HEK293 (cell line): ENCODE measurements at regions of chr3 and their contacts with region 1.

Region 1: DNA sequence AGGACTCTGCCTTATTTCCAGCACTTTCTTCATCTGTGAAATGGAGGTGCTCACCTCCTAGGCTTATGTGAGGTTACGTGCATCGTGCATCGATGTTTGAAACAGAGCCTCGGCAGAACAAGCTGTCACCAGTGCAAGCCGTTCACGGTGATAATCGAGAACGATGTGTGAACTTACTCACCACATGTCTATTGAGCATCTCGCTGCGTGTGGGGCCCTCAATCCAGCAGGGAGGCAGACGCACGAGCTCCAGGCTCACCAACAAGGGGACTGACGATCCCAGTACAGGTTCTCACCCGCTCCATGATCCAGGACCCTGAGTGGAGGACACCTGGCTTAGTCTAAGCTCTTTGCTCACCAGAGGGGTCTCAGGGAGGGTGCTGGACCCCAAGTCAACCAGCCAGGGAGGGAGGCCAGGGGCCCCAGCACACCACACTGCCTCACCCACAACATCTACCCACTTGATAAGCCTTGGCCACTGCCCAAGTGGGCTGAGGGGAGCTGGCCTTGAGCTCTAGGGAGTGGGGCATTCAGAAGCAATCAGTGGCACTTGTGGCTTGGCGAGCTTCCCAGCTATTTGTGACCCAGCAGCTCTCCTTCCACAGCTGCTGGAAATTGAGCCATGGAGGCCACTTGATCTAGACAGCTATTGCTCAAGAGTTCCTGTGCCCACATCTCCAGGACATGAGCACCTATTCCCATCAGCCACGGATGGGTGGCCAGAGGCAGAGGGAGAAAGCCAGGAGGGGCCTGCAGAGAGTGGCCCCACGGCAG is 34.4 kb upstream of the SLC6A1 start:
- H3K4me3 ChIP-seq: no peak overlapping the region
- H3K27ac ChIP-seq: no peak overlapping the region
- H3K4me1 ChIP-seq: peaks cover 2% of the 10 kb centered on the region; the same call in 1 of the 2 replicates
- CTCF ChIP-seq: no peak

Region 2: DNA sequence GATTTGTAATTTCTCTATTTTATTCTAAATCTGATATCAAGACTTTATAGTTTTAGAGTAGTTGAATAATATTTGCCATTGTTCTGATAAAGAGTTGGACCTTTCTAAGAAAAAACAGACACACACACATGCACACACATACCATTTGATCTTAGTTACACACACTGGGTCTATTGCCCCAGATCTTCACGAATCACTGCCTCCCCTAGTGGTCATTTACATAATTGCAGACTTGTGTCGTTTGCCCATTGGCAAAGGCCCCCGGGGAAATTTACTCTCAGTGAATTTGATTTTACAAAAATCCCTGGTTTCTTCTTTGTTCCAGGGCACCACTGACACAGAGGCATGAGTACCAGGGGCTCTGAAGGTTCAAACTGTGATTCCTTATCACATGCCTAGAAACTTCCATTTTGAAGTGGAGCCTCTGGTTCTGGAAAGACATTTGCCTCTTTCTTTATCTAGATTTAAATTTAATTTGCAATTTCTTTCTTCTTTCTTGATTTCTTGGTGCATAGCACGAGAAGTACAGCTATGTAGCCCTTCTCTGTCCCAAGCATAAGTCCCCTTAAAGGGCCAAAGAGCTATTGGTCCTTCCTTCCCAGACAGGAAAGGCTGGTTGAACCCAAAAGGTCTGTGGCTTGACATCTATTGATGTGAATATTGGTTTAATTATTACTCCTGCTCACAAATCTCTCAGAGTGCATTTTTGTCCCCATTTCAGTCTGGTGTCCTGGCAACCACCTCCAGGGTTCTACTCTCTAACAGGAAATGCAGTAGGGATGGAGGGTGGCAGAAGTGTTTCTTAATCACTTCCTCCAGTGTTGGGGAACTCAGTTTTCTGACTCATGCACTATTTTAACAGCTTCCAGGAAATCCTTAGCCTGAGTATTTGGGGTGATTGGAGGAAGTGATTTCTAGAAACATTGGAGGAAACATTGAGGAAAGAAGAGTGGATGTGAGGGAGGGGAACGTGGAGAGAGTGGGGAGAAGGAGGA is 174.5 kb before region 1 on chr3:
- CTCF ChIA-PET with region 1: no interaction called
- POLR2A ChIA-PET with region 1: no interaction called
- H3K4me3 ChIP-seq: no peak overlapping the region
- H3K27ac ChIP-seq: no peak overlapping the region
- H3K4me1 ChIP-seq: no peaks in the 10 kb centered on the region
- CTCF ChIP-seq: no peak

Region 3: DNA sequence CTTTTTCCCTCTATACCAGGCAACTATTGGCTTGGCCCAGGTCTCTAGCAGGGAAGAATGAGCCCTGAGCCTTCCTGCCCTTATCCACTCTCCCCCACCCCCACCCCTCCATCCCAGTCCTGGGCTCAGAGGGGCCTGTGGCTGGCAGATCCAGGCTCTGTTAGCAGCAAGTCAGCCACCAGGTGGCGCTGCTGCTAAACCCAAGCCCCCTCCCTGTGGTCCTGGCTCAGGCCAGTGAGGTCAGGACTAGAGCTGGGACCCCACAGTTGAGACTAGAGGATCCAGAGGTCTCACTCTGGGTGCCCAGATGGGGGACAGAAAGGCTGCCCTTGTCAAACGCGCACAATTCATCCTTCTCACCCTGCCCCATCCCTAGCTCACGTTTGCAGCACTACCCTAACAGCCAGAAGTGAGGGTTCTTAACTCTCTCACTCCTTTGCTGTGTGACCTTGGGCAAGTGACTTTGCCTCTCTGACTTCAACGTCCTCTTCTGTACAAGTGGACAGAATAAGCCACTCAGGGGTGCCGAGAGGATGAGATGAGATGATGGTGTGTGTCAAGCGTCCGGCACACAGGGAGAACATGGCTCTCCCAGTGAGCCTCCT is 12.4 kb before region 1 on chr3:
- CTCF ChIA-PET with region 1: interaction called, 12 read pairs
- POLR2A ChIA-PET with region 1: no interaction called
- H3K4me3 ChIP-seq: no peak overlapping the region
- H3K27ac ChIP-seq: no peak overlapping the region
- H3K4me1 ChIP-seq: no peaks in the 10 kb centered on the region
- CTCF ChIP-seq: peak; percentile 77

Region 4: GRCh38 chr3:10973046-10973595 is 15.0 kb after region 1 on chr3:
- CTCF ChIA-PET with region 1: no interaction called
- POLR2A ChIA-PET with region 1: no interaction called
- H3K4me3 ChIP-seq: no peak overlapping the region
- H3K27ac ChIP-seq: no peak overlapping the region
- H3K4me1 ChIP-seq: no peaks in the 10 kb centered on the region
- CTCF ChIP-seq: no peak